SK-MEL-5 (cell line): ENCODE measurements at regions of chr20 and their contacts with region 1.

Region 1: DNA sequence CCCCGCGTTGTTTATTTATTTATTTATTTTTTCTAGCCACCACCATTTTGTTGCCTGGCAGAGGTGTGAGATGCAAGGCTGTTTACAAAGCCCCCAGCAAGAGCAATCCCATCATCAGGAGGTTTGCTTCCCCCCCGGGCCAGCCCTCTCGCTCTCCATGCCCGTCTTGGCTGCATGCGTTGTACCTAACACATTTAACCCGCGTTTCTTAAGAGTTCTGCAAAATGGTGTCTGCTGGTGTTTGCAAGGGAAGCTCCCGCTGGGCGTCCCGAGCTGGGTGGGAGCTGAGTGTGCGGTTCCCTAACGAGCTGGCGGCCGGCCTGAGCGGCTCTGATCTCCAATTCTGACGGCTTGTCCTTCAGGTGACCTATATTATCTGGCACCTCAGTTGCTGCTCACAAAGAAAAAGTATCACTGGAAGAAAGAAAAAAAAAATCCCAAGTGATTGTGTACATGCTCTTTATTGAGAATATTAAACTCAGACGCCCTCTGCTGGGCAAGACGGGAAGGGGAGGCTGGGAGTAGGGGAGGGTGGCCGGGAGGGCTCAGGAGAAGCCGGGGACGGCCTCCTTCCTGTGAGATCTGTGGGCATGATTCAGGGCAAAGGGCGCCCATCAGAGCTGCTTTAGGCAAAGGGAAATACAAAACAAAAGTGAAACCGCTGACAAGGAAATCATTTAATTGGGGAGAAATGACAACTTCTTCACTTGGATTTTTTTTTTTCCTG is 154.8 kb downstream of the BCAS1 start:
- DNase-seq: peak; percentile 94

Region 2: GRCh38 chr20:53750827-53751619 is 164.6 kb before region 1 on chr20:
- in situ Hi-C with region 1: loop called (anchors 25 kb)
- DNase-seq: no peak

Region 3: DNA sequence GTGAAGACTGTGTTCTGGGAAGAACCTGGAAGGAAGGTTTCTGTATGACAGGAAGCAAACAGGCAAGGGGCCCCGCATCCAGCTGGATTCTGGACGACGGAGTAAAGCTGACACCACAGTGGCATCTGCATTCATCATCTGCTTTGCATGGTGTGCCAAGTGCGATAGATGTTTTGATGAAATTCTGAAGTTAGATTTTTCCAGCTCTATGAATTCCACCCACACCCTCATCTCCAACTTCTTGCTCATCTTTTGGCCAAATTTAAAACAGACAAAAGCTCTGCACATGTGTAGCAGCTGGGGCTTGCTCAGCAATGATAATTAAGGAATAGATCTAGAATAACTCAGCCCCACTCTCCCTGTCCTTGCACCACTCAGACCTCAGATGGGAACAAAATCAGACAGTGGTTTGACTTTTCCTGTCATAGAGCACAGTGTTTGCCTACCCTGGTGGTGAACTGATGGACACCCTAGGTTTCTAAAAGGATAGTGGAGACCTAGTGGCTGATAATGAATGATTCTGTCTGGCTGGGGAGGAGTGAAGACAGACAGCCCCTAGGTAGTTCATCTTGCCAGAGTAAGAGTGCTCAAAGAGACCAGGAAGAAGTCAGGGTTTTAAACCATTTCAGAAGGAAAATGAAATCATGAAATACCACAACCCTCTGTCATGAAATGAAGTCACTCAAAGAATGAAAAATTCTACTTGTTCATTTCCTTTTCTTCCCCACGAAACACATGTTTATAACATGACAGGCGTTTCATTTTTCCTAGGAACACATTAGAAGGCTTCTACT is 68.9 kb after region 1 on chr20:
- in situ Hi-C with region 1: no loop called
- DNase-seq: no peak